ENCODE measurements at regions of chr3 and their contacts with region 1.

Region 1: DNA sequence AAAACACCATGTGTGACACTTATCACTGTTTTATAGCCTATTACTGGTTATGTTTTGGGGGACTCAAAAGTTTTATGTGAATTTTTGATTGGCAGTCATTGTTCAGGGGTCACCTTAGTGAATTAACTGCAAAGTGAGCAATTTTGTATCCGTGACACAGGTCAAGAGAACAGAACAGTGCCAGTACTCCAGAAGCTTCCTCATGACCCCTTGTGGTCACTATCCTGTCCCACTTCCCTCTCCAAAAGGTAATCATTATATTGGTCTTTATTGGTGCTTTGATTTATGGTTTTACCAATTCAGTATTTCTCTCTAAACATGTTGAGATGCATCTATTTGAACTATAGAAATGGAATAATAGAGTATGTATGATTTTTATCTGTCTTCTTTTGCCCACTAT is 107.1 kb downstream of the STT3B start:
- DNase-seq: no peak
- ATAC-seq: peak; percentile 39 to 50; a peak in 1 of 6 replicates
- H3K4me3 ChIP-seq: no peak overlapping the region
- H3K27ac ChIP-seq: no peak overlapping the region
- H3K4me1 ChIP-seq: peaks cover 6% of the 10 kb centered on the region; the same call in 1 of the 3 replicates
- CTCF ChIP-seq: no peak
- EP300 ChIP-seq: no peak
- POLR2A ChIP-seq: no peak
- RAD21 ChIP-seq: no peak

Region 2: DNA sequence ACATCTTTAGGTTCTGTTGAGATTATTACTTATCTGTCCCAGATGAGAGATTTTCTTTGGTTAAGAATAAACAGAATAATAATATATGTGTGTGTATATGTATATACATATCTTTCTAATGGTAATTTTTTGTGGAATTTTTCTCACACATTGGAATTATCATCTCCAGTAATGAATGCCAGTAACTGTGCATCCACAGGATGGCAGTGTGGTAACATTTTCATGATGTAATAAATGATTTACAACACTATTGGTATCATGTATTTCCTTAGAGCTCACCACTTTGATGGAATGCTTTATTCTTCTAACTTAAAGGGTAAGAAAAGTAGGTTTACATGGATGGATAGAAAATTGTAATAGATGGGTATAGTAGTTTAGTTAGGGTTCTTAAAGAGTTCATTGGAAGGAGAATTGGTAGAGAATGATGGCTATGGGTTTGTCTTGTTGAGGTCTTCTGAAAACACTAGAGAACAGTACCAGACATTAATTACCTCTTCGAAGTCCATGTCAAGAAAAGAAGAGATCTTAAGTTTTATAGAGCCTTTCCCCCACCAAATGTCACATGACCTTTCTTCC is 29.0 kb before region 1 on chr3:
- CTCF ChIA-PET with region 1: no interaction called
- POLR2A ChIA-PET with region 1: no interaction called
- DNase-seq: peak; percentile 19 to 44
- ATAC-seq: peak in 1 of 2 experiments; percentile 71; a peak in 3 of 6 replicates
- H3K4me3 ChIP-seq: no peak overlapping the region
- H3K27ac ChIP-seq: no peak overlapping the region
- H3K4me1 ChIP-seq: peaks cover 18% of the 10 kb centered on the region
- CTCF ChIP-seq: peak; percentile 54
- EP300 ChIP-seq: no peak
- POLR2A ChIP-seq: no peak
- RAD21 ChIP-seq: peak; percentile 60 to 63

Region 3: DNA sequence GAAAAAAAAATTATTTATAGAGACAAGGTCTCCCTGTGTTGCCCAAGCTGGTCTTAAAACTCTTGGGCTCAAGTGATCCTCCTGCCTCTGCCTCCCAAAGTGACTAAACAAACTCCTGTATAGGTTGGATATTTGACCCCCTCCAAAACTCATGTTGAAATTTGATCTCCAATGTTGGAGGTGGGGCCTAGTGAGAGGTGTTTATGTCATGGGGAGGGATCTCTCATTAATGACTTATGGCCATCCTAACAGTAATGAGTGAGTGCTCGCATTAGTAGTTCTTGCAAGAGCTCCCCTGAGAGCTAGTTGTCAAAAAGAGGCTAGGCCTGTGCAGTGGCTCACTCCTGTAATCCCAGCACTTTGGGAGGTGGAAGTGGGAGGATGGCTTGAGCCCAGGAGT is 34.1 kb after region 1 on chr3:
- CTCF ChIA-PET with region 1: no interaction called
- POLR2A ChIA-PET with region 1: interaction called, 12 read pairs
- DNase-seq: no peak
- ATAC-seq: no peak
- H3K4me3 ChIP-seq: no peak overlapping the region
- H3K27ac ChIP-seq: no peak overlapping the region
- H3K4me1 ChIP-seq: no peaks in the 10 kb centered on the region
- CTCF ChIP-seq: no peak
- EP300 ChIP-seq: no peak
- POLR2A ChIP-seq: no peak
- RAD21 ChIP-seq: no peak

Region 4: DNA sequence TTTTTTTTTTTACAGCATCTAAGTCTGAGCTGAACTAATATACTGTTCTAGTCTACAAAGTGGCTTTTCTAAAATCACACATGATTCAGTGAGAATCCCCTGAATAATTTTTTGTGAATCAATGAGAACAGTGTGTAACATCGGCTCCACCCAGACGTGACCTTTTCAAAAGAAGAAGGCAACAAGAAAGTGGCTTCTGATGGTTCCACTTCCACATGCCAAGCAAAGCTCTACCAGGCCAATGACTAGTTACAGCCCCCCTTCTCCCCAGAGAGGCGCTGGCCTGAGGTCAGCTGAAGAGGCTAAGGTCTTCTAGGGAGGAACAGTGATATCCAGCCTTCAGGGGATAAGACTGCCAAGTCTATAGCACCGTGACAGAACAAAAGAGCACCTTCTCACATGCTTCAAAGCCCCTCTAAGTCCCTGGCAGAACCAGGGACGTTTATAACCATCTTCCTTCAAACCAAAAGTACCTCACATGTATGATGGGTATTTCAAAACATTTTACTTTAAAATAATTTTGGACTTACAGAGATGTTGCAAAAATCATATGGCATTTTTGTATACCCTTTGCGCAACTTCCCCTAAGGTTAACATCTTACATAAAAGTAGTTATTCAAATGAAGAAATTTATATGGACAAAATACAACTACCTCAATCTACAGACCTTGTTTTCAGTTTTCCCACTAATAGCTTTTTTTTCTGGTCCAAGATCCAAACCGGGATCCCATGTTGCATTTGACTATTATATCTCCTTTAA is 163.3 kb after region 1 on chr3:
- CTCF ChIA-PET with region 1: no interaction called
- POLR2A ChIA-PET with region 1: no interaction called
- DNase-seq: no peak
- ATAC-seq: no peak
- H3K4me3 ChIP-seq: no peak overlapping the region
- H3K27ac ChIP-seq: no peak overlapping the region
- H3K4me1 ChIP-seq: peaks cover 8% of the 10 kb centered on the region; the same call in 2 of the 3 replicates
- CTCF ChIP-seq: no peak
- EP300 ChIP-seq: no peak
- POLR2A ChIP-seq: no peak
- RAD21 ChIP-seq: no peak

Measured in A549 (cell line).